H1 (cell line): ENCODE measurements at regions of chr20 and their contacts with region 1.

Region 1: DNA sequence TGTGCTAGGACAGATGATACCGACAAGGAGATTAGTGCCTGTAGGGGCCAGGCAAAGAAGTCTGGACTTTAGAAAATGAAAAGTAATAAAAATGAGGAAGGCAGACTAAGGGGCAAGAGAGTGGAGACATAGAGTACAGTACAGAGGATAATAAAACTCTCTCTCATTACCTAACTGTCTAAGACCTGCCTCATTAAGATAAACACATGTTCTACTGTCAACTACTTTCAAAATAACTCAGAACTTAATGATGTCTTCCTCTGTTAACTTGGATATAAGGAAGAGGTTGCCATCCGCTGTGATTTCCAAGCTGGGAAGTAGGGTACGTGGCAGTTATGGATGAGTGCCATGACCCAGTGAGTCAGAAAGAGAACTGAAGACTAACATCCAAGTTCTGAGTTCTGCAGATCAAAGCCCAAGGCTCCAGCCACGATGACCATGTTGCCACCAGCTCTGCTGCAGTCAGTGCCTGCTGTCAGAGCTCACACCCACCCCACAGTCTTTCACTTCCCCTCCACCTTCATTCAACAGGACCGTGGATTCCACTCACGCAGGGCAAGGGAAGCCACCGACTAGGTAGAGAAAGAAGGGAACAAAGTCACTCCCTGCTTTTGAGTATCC is 81.8 kb downstream of the KIF16B start:
- DNase-seq: no peak
- H3K4me3 ChIP-seq: no peak overlapping the region
- H3K27ac ChIP-seq: no peak overlapping the region
- H3K4me1 ChIP-seq: peaks cover 0 to 2% (median 0%) of the 10 kb centered on the region in 4 experiments; a peak in 1 of 7 replicates
- H3K27me3 ChIP-seq: no peaks in the 10 kb centered on the region
- CTCF ChIP-seq: no peak
- EP300 ChIP-seq: no peak
- POLR2A ChIP-seq: no peak
- RAD21 ChIP-seq: no peak

Region 2: DNA sequence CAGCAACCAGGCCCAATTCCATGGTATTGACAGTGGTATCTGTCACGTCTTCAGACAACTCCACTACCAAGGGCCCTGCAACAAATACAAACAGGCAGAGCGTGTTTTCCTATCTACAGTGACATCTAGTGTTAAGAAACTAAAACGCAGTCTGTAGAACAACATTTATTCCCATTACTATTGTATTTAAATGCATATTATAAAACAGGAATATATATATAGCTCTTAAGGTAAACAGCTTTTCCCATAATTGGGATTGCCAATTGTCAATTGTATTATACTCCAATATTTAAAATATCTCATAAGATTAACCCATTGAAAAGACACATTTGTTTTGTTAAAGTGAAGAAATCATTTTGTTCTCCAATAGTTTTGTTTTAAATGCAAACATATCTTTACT is 15.4 kb before region 1 on chr20:
- CTCF ChIA-PET with region 1: interaction called, 20 read pairs
- POLR2A ChIA-PET with region 1: no interaction called
- DNase-seq: no peak
- H3K4me3 ChIP-seq: no peak overlapping the region
- H3K27ac ChIP-seq: no peak overlapping the region
- H3K4me1 ChIP-seq: no peaks in the 10 kb centered on the region; a peak in 1 of 7 replicates
- H3K27me3 ChIP-seq: no peaks in the 10 kb centered on the region
- CTCF ChIP-seq: peak in 2 of 3 experiments; percentile 40 to 51; a peak in 3 of 4 replicates
- EP300 ChIP-seq: no peak
- POLR2A ChIP-seq: no peak
- RAD21 ChIP-seq: peak; percentile 75 to 76